ENCODE measurements at regions of chr17 and their contacts with region 1.

Region 1: GRCh38 chr17:76714822-76715495 is 4.2 kb upstream of the MXRA7 start:
- DNase-seq: peak; percentile 76
- H3K4me3 ChIP-seq: no peak overlapping the region
- H3K27ac ChIP-seq: peak overlapping the region in 1 of 2 experiments; percentile 97; a peak in 3 of 4 replicates
- H3K4me1 ChIP-seq: peaks cover 10 to 32% of the 10 kb centered on the region in 2 experiments
- H3K27me3 ChIP-seq: no peaks in the 10 kb centered on the region
- CTCF ChIP-seq: peak; percentile 100
- EP300 ChIP-seq: no peak
- RAD21 ChIP-seq: peak; percentile 81

Region 2: GRCh38 chr17:76646712-76647111 is 68.2 kb before region 1 on chr17:
- CTCF ChIA-PET with region 1: no interaction called
- POLR2A ChIA-PET with region 1: no interaction called
- DNase-seq: no peak
- H3K4me3 ChIP-seq: no peak overlapping the region
- H3K27ac ChIP-seq: no peak overlapping the region
- H3K4me1 ChIP-seq: no peaks in the 10 kb centered on the region
- H3K27me3 ChIP-seq: no peaks in the 10 kb centered on the region; the same call in 1 of the 2 replicates
- CTCF ChIP-seq: no peak
- EP300 ChIP-seq: no peak
- RAD21 ChIP-seq: no peak

Region 3: DNA sequence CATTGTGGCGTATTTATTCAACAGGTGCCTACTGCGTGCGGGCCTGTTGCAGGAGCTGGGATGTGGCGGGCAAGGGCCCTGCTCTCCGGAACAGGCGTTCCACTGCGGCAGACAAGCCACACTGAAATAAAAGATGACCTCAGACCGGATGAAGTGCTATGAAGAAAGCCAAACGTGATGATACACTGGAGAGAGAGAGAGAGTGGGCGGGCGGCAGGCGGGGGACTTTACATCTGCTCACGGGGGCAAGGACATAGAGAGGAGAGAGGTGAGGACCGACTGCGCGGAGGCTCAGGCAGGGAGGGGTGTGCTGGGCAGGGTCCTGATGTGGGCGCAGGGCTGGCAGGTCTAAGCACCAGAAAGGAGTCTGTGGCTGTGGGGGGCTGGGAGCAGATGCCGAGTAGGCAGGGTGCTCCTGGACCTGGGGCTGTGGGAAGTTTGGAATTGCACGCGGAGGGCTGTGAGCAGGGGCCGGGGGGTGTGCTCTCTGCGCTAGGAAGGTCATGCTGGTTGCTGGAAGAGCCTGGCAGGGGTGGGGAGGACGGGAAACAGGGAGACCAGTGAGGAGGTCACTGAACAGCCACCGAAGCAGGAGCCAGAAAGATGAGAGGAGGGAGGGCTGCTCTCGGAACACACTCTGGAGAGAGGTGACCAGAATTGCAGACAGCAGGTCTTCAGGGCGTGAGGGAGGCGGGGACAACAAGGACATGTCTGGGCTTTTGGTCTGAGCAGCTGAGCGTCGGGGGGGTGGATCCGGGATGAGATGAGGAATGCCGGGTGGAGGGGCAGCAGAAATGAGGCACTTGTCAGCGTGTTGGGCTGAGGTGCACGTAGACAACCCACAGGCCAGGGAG is 14.1 kb before region 1 on chr17:
- CTCF ChIA-PET with region 1: interaction called, 50 read pairs
- POLR2A ChIA-PET with region 1: interaction called, 8 read pairs
- DNase-seq: peak; percentile 85
- H3K4me3 ChIP-seq: peak overlapping the region; percentile 24 to 50
- H3K27ac ChIP-seq: peak overlapping the region; percentile 78 to 84
- H3K4me1 ChIP-seq: peaks cover 26 to 45% of the 10 kb centered on the region in 2 experiments
- H3K27me3 ChIP-seq: no peaks in the 10 kb centered on the region
- CTCF ChIP-seq: no peak
- EP300 ChIP-seq: no peak; a peak in 1 of 4 replicates
- RAD21 ChIP-seq: no peak

Region 4: GRCh38 chr17:76726231-76726775 is 11.3 kb after region 1 on chr17 and contains the start of gene JMJD6:
- CTCF ChIA-PET with region 1: interaction called, 75 read pairs
- POLR2A ChIA-PET with region 1: interaction called, 6 read pairs
- DNase-seq: peak; percentile 99
- H3K4me3 ChIP-seq: peak within 1 kb of the TSS; percentile 74 to 99
- H3K27ac ChIP-seq: peak within 1 kb of the TSS; percentile 94 to 96
- H3K4me1 ChIP-seq: peaks cover 14 to 20% of the 10 kb centered on the region in 2 experiments
- H3K27me3 ChIP-seq: no peaks in the 10 kb centered on the region
- CTCF ChIP-seq: no peak
- EP300 ChIP-seq: no peak
- RAD21 ChIP-seq: no peak
- polyA plus RNA-seq, gene JMJD6: 20.1 and 23.3 TPM in 2 replicates

Region 5: DNA sequence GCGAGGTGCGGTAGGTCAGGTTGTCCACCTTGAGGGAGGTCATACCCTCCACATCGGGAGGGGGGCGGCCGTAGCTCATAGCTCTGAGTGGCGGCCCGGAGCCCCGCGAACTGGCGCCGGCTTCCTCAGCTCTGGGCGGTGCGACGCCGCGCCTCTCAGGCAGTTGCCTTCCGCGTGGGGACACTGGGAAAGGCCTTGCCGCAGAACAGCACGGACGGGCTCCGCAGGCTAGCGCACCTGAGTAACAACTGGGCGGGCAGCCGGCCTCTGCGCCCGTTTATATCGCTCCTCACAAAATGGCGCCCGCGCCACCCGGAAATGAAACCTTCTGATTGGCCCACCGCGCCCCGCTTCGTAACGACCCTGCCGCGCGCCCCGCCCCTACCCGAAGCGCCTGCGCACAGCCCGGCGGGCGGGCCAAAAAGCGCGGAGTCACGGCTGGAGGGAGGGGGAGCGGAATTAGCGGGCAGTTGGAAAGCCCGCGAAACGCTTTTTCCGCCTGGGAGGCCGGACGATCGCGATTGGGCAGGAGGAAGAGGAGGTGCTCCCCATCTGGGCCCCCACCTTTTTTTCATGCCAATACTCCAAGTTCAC is 22.2 kb after region 1 on chr17 and contains the start of gene SRSF2:
- CTCF ChIA-PET with region 1: interaction called, 17 read pairs
- POLR2A ChIA-PET with region 1: interaction called, 8 read pairs
- DNase-seq: peak; percentile 100
- H3K4me3 ChIP-seq: peak within 1 kb of the TSS; percentile 93 to 100
- H3K27ac ChIP-seq: peak within 1 kb of the TSS; percentile 98 to 100
- H3K4me1 ChIP-seq: peaks cover 34 to 44% of the 10 kb centered on the region in 2 experiments
- H3K27me3 ChIP-seq: no peaks in the 10 kb centered on the region
- CTCF ChIP-seq: no peak
- EP300 ChIP-seq: peak in 1 of 2 experiments; percentile 26; a peak in 1 of 4 replicates
- RAD21 ChIP-seq: no peak
- polyA plus RNA-seq, gene SRSF2: 211 and 271 TPM in 2 replicates

Region 6: DNA sequence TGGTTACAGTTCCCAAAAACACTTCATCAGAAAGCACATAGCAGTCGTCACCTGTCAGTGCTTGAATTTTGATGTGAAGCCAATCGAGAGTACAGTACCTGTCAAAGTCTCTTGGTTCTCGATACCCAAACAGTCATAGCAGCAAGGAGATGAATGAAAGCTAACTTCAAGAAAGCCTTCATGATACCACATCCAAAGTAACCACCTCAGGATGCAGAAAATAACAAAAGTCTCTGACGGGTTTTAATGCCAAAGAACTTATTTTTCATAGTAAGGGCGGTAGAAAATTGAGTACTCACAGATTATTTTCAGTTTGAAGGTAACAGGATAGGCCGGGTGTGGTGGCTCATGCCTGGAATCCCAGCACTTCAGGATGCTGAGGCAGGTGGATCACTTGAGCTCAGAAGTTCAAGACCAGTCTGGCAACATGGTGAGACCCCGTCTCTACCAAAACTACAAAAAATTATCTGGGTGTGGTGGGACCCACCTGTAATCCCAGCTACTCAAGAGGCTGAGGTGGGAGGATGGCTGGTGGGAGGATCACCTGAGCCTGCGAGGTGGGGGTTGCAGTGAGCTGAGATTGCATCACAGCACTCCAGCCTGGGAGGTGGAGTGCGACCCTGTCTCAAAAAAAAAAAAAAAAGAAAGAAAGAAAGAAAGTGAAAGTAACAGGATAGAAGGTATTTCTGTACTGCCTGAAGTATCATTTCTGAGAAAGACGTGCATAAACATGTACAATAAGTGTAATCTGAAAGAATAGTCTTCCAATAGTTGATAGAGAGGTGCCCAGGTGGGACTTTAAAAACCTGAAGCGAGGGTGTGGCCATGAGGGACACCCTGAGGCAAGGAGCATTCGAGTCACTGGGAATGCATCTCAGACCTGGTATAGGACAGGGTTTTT is 38.4 kb after region 1 on chr17:
- CTCF ChIA-PET with region 1: no interaction called
- POLR2A ChIA-PET with region 1: no interaction called
- DNase-seq: no peak
- H3K4me3 ChIP-seq: no peak overlapping the region
- H3K27ac ChIP-seq: no peak overlapping the region
- H3K4me1 ChIP-seq: no peaks in the 10 kb centered on the region
- H3K27me3 ChIP-seq: no peaks in the 10 kb centered on the region
- CTCF ChIP-seq: no peak
- EP300 ChIP-seq: no peak
- RAD21 ChIP-seq: no peak